ENCODE measurements at regions of chr6 and their contacts with region 1.

Region 1: DNA sequence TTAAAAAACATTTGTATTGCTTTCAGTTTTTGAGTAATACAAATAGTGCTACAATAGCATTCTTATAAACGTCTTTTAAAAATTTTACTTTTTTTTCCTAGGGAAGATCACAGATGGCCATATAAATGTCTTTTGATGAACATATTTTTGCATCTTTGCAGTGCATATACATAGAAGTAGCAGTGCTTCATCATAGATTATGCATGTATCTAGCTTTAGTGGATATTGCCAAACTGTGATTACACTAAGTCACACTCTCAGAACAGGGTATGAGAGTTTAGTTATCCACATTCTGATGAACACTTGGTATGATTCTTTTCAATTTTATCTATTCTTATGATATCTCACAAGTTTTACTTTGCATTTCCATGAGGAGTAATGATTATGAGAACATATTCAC is 99.8 kb upstream of the ASCC3 start:
- DNase-seq: no peak
- H3K4me3 ChIP-seq: no peak overlapping the region
- H3K27ac ChIP-seq: no peak overlapping the region
- H3K4me1 ChIP-seq: no peaks in the 10 kb centered on the region
- H3K27me3 ChIP-seq: no peaks in the 10 kb centered on the region
- CTCF ChIP-seq: no peak

Region 2: GRCh38 chr6:100415780-100416179 is 565.2 kb before region 1 on chr6:
- CTCF ChIA-PET with region 1: no interaction called
- POLR2A ChIA-PET with region 1: no interaction called
- intact Hi-C with region 1: no loop called
- DNase-seq: no peak
- H3K4me3 ChIP-seq: no peak overlapping the region
- H3K27ac ChIP-seq: no peak overlapping the region
- H3K4me1 ChIP-seq: no peaks in the 10 kb centered on the region
- H3K27me3 ChIP-seq: no peaks in the 10 kb centered on the region
- CTCF ChIP-seq: no peak

Region 3: DNA sequence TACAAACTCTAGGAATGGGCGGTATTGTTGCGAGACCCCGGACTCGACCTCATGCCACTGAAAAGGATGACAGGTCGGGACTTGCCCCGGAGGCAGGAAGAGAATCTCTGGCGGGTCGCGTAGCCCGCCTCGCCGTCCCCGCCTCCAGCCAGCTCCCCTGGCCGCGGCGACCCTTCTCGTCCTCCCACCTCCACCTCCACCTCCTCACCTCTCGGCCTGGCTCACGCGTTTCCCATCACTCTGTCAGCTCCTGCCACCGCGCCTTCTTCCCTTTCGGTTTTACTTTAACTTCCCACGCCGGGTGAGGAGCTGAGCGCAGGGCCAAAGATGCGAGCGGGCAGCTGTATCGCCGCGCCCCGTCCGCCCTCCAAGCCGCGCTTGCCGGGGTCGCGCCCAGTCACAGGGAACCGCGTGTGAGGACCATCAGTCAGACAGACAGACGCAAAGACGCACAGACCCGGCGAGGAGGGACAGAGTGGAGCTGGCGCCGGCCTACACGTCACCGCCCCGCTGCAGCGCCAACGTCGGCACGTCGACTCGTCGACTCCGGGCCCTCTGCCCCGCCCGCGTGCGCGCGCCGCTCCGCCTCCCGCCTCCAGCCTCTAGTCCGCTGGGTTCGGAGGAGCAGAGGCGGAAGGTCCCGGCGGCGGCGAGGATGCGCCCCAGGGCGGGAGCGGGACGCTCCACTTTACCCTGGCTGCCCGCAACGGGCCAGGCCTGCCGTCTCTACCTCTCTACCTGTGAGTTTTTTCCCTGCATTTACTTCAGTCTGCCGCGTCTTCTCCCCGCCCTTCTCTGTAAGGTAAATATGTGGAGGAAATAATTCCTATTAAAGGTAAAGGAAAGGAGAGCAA is 99.9 kb before region 1 on chr6 and contains the start of gene ASCC3:
- CTCF ChIA-PET with region 1: no interaction called
- POLR2A ChIA-PET with region 1: interaction called, 12 read pairs
- intact Hi-C with region 1: no loop called
- DNase-seq: peak; percentile 95
- H3K4me3 ChIP-seq: peak within 1 kb of the TSS; percentile 97
- H3K27ac ChIP-seq: peak within 1 kb of the TSS; percentile 88
- H3K4me1 ChIP-seq: peaks cover 8% of the 10 kb centered on the region
- H3K27me3 ChIP-seq: no peaks in the 10 kb centered on the region
- CTCF ChIP-seq: no peak
- total RNA-seq, gene ASCC3: 32.2 and 32.5 TPM in 2 replicates

Measured in A673 (cell line).